HepG2 (cell line): ENCODE measurements at regions of chr2 and their contacts with region 1.

Region 1: GRCh38 chr2:71291398-71291797 is 40.2 kb upstream of the ZNF638 start:
- DNase-seq: no peak
- ATAC-seq: no peak
- H3K4me3 ChIP-seq: no peak overlapping the region
- H3K27ac ChIP-seq: no peak overlapping the region
- H3K4me1 ChIP-seq: no peaks in the 10 kb centered on the region
- H3K27me3 ChIP-seq: peaks cover 0 to 9% of the 10 kb centered on the region in 2 experiments; a peak in 2 of 5 replicates
- CTCF ChIP-seq: no peak
- EP300 ChIP-seq: no peak
- POLR2A ChIP-seq: no peak
- RAD21 ChIP-seq: no peak

Region 2: DNA sequence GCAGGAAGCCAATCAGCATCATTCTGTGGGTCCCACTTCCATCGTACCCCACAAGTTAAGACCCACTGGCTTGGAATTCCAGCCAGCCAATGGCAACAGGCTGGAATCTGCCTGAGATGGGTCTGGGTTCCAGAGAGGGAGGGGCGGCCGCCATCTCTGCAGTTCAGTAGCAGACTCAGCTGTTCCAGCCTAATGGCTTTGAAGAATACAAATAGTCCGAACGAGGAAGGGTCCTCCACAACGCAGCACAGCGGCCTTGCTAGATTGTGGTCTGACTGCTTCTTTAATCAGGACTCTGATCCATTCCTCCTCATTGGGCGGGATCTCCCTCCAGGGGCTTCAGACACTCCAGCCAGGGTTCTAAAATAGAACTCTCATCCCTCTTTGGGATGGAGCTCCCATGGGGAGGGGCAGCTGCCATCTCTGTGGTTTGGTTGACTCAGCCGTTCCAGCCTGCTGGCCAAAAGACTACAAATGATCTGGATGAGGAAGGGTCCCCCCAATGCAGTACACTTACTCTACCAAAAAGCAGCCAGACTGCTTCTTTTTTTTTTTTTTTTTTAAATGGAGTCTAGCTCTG is 21.8 kb before region 1 on chr2:
- CTCF ChIA-PET with region 1: no interaction called
- POLR2A ChIA-PET with region 1: no interaction called
- in situ Hi-C with region 1: no loop called
- intact Hi-C with region 1: loop called (anchors 1 kb)
- DNase-seq: no peak
- ATAC-seq: no peak
- H3K4me3 ChIP-seq: no peak overlapping the region
- H3K27ac ChIP-seq: no peak overlapping the region
- H3K4me1 ChIP-seq: no peaks in the 10 kb centered on the region
- H3K27me3 ChIP-seq: peaks cover 4 to 17% of the 10 kb centered on the region in 2 experiments; a peak in 3 of 5 replicates
- CTCF ChIP-seq: no peak
- EP300 ChIP-seq: no peak
- POLR2A ChIP-seq: no peak
- RAD21 ChIP-seq: no peak